ENCODE measurements at regions of chr13 and their contacts with region 1.

Region 1: DNA sequence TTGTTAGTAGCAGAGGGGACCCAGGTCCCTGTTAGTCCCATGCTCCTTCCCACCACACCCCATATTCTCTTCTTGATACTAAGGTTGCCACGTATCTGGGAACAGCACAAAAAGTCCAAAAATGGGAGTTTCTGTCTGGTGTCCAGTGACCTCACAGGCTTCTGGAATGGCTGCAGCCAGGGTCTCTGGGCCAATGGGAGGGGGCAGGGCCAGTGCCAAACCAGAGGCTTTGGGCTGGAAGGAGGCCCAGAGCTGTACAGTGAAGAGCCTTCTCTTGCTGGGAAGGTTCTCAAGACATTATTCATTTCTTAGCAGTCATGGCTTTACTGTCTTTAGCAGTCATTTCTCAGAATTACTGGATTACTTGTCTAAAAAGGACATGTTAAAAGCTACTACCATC is 119.2 kb downstream of the FRY start:
- DNase-seq: no peak
- H3K4me3 ChIP-seq: no peak overlapping the region
- H3K27ac ChIP-seq: no peak overlapping the region
- H3K4me1 ChIP-seq: no peaks in the 10 kb centered on the region
- H3K27me3 ChIP-seq: no peaks in the 10 kb centered on the region
- CTCF ChIP-seq: no peak
- POLR2A ChIP-seq: no peak

Region 2: GRCh38 chr13:32031025-32031814 is 119.6 kb before region 1 on chr13 and contains the start of gene FRY:
- intact Hi-C with region 1: loop called (anchors 10 kb)
- DNase-seq: peak; percentile 56
- H3K4me3 ChIP-seq: peak within 1 kb of the TSS; percentile 47 to 48
- H3K27ac ChIP-seq: peak within 1 kb of the TSS; percentile 77 to 79
- H3K4me1 ChIP-seq: peaks cover 3% of the 10 kb centered on the region
- H3K27me3 ChIP-seq: no peaks in the 10 kb centered on the region
- CTCF ChIP-seq: no peak
- POLR2A ChIP-seq: no peak
- total RNA-seq, gene FRY: 16.4 to 33.3 TPM